ENCODE measurements at regions of chr2 and their contacts with region 1.

Region 1: GRCh38 chr2:84443477-84443876 is 15.6 kb downstream of the SUCLG1 start:
- DNase-seq: no peak
- ATAC-seq: no peak
- H3K4me3 ChIP-seq: no peak overlapping the region
- H3K27ac ChIP-seq: no peak overlapping the region
- H3K4me1 ChIP-seq: peaks cover 0 to 8% (median 0%) of the 10 kb centered on the region in 12 donors
- H3K27me3 ChIP-seq: no peaks in the 10 kb centered on the region
- CTCF ChIP-seq: no peak
- POLR2A ChIP-seq: no peak

Region 2: GRCh38 chr2:83967854-83968253 is 475.6 kb before region 1 on chr2:
- intact Hi-C with region 1: no loop called
- DNase-seq: no peak
- ATAC-seq: no peak
- H3K4me3 ChIP-seq: no peak overlapping the region
- H3K27ac ChIP-seq: no peak overlapping the region
- H3K4me1 ChIP-seq: no peaks in the 10 kb centered on the region
- H3K27me3 ChIP-seq: peaks cover 0 to 3% (median 0%) of the 10 kb centered on the region in 9 donors
- CTCF ChIP-seq: no peak
- POLR2A ChIP-seq: no peak

Region 3: GRCh38 chr2:84456156-84456555 is 12.7 kb after region 1 on chr2:
- intact Hi-C with region 1: loop called in 1 of 10 experiments (anchors 1 kb)
- DNase-seq: no peak
- ATAC-seq: no peak
- H3K4me3 ChIP-seq: no peak overlapping the region
- H3K27ac ChIP-seq: no peak overlapping the region
- H3K4me1 ChIP-seq: peaks cover 3 to 71% (median 39%) of the 10 kb centered on the region in 12 donors
- H3K27me3 ChIP-seq: no peaks in the 10 kb centered on the region
- CTCF ChIP-seq: no peak
- POLR2A ChIP-seq: no peak

Region 4: DNA sequence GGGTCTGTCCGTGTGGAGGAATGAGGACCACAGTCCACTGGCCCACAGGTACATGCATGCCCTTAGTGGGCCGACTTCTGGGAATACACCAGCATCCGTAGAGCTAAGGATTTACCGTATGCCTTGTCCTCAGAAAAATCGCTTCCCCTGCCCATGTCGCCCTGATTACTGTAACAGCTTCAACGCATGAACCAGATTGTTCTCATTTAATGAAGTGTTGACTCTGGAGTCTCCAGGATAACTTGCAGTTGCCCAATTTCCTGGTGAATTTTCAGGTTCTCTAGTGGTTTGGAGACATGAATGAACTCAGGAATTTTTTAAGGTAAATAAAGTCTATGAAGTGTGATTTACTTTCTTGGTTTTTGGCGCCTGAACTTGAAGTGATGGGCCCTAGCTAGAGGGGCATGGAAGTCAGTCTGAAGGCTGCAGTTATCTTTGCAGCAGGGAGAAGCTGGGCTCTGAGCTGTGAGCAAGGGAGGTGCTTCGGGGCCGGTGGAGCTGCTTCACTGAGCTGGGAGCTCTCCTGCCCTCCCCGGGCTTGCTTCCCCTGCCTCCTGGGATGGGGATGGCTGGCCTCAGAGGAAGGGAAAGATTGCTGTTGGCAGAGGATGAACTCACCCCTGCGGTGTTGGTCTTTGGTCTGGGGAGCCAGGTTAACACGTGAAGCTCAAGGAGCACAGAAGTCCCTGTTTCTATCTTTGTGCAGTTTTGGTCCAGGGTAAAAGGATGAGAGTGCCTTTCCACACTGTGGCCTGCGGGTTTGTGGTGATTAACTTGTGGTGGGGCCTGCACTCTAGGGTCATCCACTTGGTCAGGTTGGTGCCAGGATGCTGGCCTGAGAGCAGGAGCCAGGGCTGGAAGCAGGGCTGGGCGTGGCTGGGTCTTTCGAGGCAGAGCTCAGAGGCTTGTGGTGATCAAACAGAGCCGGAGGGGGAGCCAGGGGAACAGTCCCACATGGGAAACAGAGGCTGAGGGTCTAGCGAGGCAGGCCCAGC is 717.8 kb after region 1 on chr2:
- intact Hi-C with region 1: no loop called
- DNase-seq: no peak
- ATAC-seq: no peak
- H3K4me3 ChIP-seq: no peak overlapping the region
- H3K27ac ChIP-seq: no peak overlapping the region
- H3K4me1 ChIP-seq: peaks cover 0 to 91% (median 56%) of the 10 kb centered on the region in 12 donors
- H3K27me3 ChIP-seq: no peaks in the 10 kb centered on the region
- CTCF ChIP-seq: no peak
- POLR2A ChIP-seq: no peak